ENCODE measurements at regions of chr3 and their contacts with region 1.

Region 1: GRCh38 chr3:45167011-45167911 is 21.1 kb upstream of the CDCP1 start:
- DNase-seq: peak; percentile 76
- H3K4me3 Mint-ChIP-seq: peak overlapping the region; percentile 72
- H3K27ac Mint-ChIP-seq: peak overlapping the region; percentile 93
- H3K4me1 Mint-ChIP-seq: peaks cover 44% of the 10 kb centered on the region
- H3K27me3 Mint-ChIP-seq: peaks cover 4% of the 10 kb centered on the region

Region 2: GRCh38 chr3:44966750-44967278 is 200.4 kb before region 1 on chr3:
- intact Hi-C with region 1: no loop called
- DNase-seq: no peak
- H3K4me3 Mint-ChIP-seq: no peak overlapping the region
- H3K27ac Mint-ChIP-seq: no peak overlapping the region
- H3K4me1 Mint-ChIP-seq: peaks cover 70% of the 10 kb centered on the region
- H3K27me3 Mint-ChIP-seq: no peaks in the 10 kb centered on the region

Region 3: DNA sequence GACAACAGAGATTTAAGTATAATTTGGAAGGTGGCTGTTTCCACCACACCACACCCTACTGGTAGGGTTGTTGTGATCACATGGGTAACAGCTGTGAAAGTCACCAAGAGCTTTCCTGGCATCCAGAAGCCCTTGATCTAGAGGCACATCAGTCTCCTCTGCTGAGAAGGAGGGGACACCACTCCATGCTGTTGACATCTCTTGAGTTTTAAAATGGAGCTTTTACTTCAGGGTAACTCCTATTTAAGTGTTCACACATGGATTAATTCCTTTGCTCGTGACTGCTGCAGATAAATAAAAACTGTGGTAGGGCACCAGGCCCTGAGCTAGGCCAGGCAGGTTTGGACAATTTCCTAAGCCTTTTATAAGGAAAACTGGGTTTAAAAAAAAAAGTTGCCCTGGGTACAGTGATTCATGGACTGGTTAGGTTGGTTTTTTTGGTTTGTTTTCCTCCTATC is 183.7 kb before region 1 on chr3:
- intact Hi-C with region 1: loop called (anchors 5 kb)
- DNase-seq: no peak
- H3K4me3 Mint-ChIP-seq: no peak overlapping the region
- H3K27ac Mint-ChIP-seq: no peak overlapping the region
- H3K4me1 Mint-ChIP-seq: peaks cover 69% of the 10 kb centered on the region
- H3K27me3 Mint-ChIP-seq: no peaks in the 10 kb centered on the region

Region 4: DNA sequence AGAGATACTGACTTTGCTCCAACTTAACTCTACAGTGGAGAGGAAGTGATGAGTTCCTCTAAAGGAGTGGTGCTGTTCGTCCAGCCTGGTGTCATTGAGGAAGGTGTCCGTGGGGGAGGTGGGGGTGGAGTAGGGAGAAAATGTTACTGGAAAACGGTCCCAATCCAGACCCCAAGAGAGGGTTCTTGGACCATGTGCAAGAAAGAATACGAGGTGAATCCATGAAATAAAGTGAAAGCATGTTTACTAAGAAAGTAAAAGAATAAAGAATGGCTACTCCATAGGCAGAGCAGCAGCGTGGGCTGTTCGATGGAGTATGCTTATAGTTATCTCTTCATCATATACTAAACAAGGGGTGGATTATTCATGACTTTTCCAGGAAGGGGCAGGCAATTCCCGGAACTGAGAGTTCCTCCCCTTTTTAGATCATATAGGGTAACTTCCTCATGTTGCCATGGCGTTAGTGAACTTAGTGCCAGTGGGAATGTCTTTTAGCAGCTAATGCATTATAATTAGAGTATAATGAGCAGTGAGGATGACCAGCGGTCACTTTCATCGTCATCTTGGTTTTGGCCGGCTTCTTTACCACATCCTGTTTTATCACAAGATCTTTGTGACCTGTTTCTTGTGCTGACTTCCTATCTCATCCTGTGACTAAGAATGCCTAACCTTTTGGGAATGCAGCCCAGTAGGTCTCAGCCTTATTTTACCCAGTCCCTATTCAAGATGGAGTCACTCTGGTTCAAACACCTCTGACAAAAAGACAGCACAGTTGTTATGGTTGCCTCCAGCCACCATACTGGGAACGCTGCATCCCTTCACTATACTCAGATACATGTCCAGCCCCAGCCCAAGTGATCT is 102.5 kb before region 1 on chr3:
- intact Hi-C with region 1: loop called (anchors 1 kb)
- DNase-seq: peak; percentile 30
- H3K4me3 Mint-ChIP-seq: peak overlapping the region; percentile 63
- H3K27ac Mint-ChIP-seq: peak overlapping the region; percentile 82
- H3K4me1 Mint-ChIP-seq: peaks cover 30% of the 10 kb centered on the region
- H3K27me3 Mint-ChIP-seq: peaks cover 15% of the 10 kb centered on the region

Region 5: DNA sequence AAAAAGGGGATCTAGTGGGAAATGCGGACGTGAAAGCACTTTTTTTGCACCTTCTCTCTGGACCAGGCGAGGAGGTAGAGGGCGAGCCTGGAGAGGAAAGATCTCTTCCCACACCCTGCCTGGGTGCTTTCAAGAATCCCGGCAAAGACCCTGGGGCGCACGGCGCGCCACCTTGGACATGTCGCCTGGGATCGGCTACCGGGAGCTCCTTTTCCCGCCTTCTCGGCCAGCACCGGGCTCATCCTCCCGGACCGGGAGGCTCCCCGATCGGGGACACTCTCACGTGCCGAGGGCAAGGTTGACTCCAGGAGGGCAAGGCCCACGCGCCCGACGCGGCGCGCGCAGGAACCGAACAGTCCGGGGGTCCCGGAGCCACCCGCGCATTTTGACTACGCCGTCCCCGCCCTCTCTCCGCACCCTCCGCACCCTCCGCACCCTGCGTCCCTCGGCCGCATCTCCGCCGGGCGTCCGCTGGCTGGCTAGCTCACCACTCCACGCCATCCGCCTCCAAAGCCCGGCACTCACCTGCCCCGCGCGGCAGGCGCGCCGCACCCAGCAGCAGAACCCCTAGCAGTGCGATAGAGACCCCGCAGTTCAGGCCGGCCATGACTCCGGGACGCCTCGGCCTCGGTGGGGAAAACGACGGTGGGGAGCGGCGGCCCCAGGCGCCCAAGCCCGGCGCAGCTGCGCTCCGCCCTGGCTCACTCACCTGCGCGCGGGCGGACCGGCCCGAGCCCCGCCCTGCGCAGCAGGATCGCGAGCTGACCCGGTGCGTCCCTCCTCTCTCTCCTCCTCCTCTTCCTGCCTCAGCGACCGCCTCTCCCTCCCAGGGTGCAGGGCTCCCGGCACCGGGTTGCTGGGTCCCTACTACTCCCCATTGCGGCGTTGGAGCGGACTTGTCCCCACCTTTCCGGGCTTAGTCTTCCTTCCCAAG is 21.3 kb before region 1 on chr3 and contains the start of gene CDCP1:
- intact Hi-C with region 1: loop called (anchors 2 kb)
- DNase-seq: no peak
- H3K4me3 Mint-ChIP-seq: peak within 1 kb of the TSS; percentile 81
- H3K27ac Mint-ChIP-seq: no peak within 1 kb of the TSS
- H3K4me1 Mint-ChIP-seq: peaks cover 5% of the 10 kb centered on the region
- H3K27me3 Mint-ChIP-seq: peaks cover 75% of the 10 kb centered on the region
- total RNA-seq, gene CDCP1: 0.98 and 1.2 TPM in 2 replicates

Region 6: GRCh38 chr3:45210308-45211041 is 43.2 kb after region 1 on chr3:
- intact Hi-C with region 1: loop called (anchors 1 kb)
- DNase-seq: peak; percentile 67
- H3K4me3 Mint-ChIP-seq: no peak overlapping the region
- H3K27ac Mint-ChIP-seq: no peak overlapping the region
- H3K4me1 Mint-ChIP-seq: peaks cover 14% of the 10 kb centered on the region
- H3K27me3 Mint-ChIP-seq: peaks cover 29% of the 10 kb centered on the region

Region 7: DNA sequence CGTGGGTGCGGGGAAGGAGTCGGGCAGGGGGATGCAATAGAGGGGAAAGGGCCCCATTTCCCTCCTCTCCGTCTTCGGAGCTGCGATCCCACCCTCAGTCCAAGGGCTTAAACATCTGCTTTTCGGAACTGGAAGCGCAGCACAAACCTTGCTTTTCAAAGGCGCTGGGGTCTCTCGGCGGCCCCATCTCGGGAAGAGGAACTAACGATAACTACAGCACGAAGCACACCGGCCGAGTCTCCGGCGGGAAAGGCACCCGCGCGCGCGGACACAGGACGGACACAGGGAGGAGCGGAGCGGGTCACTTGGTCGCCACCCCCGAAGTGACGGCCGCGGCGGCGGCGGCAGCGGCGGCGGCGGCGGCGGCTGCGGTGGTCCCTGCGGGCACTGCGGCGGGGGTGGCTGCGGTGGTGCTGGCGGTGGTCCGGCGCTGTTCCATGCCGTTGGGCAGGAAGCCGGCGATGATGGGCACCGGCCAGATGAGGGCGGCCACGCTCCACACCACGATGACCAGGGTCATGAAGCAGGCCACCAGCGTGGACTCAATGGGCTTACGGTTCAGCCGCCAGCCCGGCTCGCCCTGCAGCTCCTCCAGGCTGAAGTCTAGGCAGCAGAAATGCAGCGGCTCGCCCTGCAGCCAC is 57.7 kb after region 1 on chr3:
- intact Hi-C with region 1: loop called (anchors 1 kb)
- DNase-seq: peak; percentile 4
- H3K4me3 Mint-ChIP-seq: peak overlapping the region; percentile 79
- H3K27ac Mint-ChIP-seq: peak overlapping the region; percentile 80
- H3K4me1 Mint-ChIP-seq: peaks cover 17% of the 10 kb centered on the region
- H3K27me3 Mint-ChIP-seq: peaks cover 75% of the 10 kb centered on the region